PC-9 (cell line): ENCODE measurements at regions of chr17 and their contacts with region 1.

Region 1: DNA sequence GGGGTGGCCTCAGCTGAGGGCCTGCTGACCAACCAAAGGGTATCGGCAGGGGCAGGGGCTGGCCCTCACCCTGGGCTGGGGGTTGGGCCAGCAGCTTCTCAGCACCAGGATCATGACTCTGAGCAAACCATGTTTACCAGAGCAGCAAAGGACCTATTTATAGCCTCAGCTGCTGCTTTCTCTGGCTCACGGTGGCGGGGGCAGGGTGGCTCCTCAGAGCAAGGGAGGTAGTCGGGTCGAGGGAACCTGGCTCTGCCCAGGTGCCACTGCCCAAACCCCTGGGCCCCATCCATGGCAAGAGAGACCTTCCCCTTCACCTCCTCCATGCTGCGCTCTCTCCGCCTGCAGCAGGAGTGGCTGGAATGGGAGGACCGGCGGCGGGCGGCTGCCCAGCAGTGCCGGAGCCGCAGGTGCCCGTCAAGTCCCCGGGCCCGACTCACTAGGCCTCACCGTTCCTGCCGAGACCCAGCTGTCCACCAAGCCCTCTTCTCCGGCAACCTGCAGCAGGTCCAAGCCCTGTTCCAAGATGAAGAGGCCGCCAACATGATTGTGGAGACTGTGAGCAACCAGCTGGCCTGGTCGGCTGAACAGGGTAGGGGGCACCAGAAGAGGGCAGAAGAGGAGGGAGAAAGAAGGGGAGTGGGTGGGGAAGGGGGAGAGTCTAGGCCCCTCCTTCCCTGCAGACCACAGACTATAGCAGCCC is at the start of gene ASB16:
- DNase-seq: no peak
- H3K4me3 ChIP-seq: no peak within 1 kb of the TSS
- H3K27ac ChIP-seq: no peak within 1 kb of the TSS
- H3K4me1 ChIP-seq: no peaks in the 10 kb centered on the region
- H3K27me3 ChIP-seq: no peaks in the 10 kb centered on the region
- CTCF ChIP-seq: no peak
- total RNA-seq, gene ASB16: not detected in 2 replicates

Region 2: DNA sequence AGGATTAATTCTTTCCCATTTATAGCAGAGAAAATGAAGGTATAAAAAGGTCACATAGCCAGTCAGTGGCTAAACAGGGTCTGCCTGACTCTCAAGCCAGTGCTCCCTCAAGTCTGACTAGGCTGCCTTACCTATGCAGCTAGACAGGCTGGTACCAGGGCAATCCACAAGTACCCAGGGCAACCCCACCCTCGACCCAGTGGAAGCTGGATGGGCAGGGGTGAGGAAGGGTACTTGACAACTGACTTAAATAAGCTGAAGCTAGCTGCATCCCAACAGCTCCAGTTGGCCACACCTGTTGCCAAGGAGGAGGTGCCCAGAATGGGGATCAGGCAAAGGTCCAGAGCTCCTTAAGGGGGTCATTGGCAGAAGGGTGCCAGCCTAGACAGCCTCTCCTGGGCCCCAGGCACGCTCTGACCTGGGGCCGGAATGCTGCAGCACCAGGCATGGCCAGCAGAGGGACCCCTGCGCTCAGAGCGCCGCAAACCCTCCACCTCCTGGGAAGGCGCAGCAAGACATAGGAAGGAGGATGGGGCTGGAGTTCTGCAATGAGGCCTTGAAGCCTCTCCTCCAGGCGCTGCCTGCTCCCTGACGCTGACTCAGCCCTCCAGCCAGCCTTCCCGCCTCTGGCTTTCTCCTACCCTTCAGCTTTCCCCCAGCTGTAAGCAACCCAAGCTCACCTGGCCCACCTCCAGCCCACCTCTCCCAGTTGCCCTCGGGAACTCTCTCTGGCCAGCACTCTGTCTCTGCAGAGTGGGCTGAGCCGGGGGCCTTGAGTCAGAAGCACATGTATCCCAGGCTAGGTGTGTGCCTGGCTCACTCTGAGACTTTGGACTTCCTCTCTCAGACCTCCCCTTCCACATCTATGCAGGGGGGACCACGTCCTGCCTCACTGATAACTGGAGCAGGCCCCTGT is 292.1 kb before region 1 on chr17:
- CTCF ChIA-PET with region 1: no interaction called
- POLR2A ChIA-PET with region 1: no interaction called
- intact Hi-C with region 1: loop called (anchors 1 kb)
- DNase-seq: peak; percentile 73 to 84
- H3K4me3 ChIP-seq: no peak overlapping the region
- H3K27ac ChIP-seq: no peak overlapping the region
- H3K4me1 ChIP-seq: no peaks in the 10 kb centered on the region
- H3K27me3 ChIP-seq: no peaks in the 10 kb centered on the region
- CTCF ChIP-seq: peak; percentile 92

Region 3: GRCh38 chr17:44086364-44087311 is 84.0 kb before region 1 on chr17:
- CTCF ChIA-PET with region 1: interaction called, 14 read pairs
- POLR2A ChIA-PET with region 1: no interaction called
- intact Hi-C with region 1: loop called (anchors 1 kb)
- DNase-seq: peak; percentile 56 to 58
- H3K4me3 ChIP-seq: no peak overlapping the region
- H3K27ac ChIP-seq: no peak overlapping the region
- H3K4me1 ChIP-seq: peaks cover 16% of the 10 kb centered on the region
- H3K27me3 ChIP-seq: no peaks in the 10 kb centered on the region
- CTCF ChIP-seq: no peak

Region 4: GRCh38 chr17:44186307-44187130 is 15.9 kb after region 1 on chr17 and contains the start of gene TMUB2:
- CTCF ChIA-PET with region 1: interaction called, 9 read pairs
- POLR2A ChIA-PET with region 1: interaction called, 10 read pairs
- intact Hi-C with region 1: no loop called
- DNase-seq: peak; percentile 95 to 99
- H3K4me3 ChIP-seq: peak within 1 kb of the TSS; percentile 94
- H3K27ac ChIP-seq: peak within 1 kb of the TSS; percentile 71
- H3K4me1 ChIP-seq: peaks cover 16% of the 10 kb centered on the region; the same call in 1 of the 2 replicates
- H3K27me3 ChIP-seq: no peaks in the 10 kb centered on the region
- CTCF ChIP-seq: no peak
- total RNA-seq, gene TMUB2: 39.2 and 45.5 TPM in 2 replicates